B cell (primary cell): ENCODE measurements at regions of chr17 and their contacts with region 1.

Region 1: DNA sequence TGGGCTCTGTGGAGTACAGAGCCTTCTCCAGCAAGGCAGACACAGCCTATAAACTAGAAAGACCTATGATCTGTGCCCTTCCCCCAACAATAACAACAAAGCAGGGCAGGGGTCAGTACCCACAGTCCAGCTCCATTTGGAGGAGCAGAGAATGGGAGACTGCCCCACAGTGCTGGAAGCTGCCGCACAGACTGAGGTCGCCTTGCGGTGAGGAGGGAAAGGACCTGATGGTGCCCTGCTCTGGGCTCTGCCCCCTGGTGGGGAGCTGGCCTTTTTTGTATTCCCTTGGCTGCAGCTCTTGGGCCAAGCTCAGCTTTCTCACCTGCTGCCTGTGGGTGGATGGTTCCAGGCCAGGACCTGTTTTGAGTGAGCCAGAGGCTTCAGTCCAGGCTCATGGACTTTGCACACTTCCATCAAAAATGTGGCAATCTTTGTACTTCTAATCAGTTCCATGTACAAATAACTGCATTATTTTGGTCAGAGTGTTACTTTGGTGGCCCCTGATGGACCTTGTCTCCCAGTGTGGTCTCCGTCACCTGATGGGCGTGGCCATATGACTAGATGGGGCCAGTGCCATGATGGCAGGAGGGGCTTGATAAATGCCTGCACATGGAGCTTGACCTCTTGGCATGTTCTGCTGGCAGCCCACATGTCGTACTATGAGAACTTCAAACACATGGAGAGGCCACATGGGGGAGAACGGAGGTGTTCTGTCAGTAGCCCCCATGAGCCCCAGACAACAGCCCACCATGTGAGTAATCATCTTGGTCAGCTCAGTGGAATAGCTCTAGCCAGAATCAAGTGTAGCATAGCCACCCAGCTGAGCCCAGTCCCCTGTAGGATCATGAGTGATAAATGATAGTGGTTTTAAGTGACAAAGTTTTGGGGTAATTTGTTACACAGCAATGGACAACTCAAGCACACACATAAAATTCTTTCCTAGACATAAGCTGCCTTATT is 24.2 kb downstream of the B9D1 start:
- DNase-seq: peak; percentile 86
- ATAC-seq: peak; percentile 98
- H3K4me3 ChIP-seq: no peak overlapping the region
- H3K4me3 Mint-ChIP-seq: no peak overlapping the region
- H3K27ac ChIP-seq: no peak overlapping the region
- H3K27ac Mint-ChIP-seq: no peak overlapping the region
- H3K4me1 ChIP-seq: peaks cover 0 to 3% of the 10 kb centered on the region in 2 donors
- H3K4me1 Mint-ChIP-seq: no peaks in the 10 kb centered on the region
- H3K27me3 ChIP-seq: peaks cover 0 to 3% (median 0%) of the 10 kb centered on the region in 4 experiments
- H3K27me3 Mint-ChIP-seq: peaks cover 15% of the 10 kb centered on the region
- CTCF ChIP-seq: peak; percentile 88

Region 2: GRCh38 chr17:19317359-19318095 is 20.8 kb before region 1 on chr17:
- CTCF ChIA-PET with region 1: interaction called, 23 read pairs
- POLR2A ChIA-PET with region 1: no interaction called
- intact Hi-C with region 1: loop called (anchors 1 kb)
- DNase-seq: peak; percentile 54
- ATAC-seq: peak; percentile 96
- H3K4me3 ChIP-seq: no peak overlapping the region
- H3K4me3 Mint-ChIP-seq: no peak overlapping the region
- H3K27ac ChIP-seq: no peak overlapping the region
- H3K27ac Mint-ChIP-seq: no peak overlapping the region
- H3K4me1 ChIP-seq: peaks cover 0 to 4% of the 10 kb centered on the region in 2 donors
- H3K4me1 Mint-ChIP-seq: peaks cover 7% of the 10 kb centered on the region
- H3K27me3 ChIP-seq: peaks cover 0 to 20% (median 0%) of the 10 kb centered on the region in 4 experiments
- H3K27me3 Mint-ChIP-seq: peaks cover 6% of the 10 kb centered on the region
- CTCF ChIP-seq: peak; percentile 17

Region 3: DNA sequence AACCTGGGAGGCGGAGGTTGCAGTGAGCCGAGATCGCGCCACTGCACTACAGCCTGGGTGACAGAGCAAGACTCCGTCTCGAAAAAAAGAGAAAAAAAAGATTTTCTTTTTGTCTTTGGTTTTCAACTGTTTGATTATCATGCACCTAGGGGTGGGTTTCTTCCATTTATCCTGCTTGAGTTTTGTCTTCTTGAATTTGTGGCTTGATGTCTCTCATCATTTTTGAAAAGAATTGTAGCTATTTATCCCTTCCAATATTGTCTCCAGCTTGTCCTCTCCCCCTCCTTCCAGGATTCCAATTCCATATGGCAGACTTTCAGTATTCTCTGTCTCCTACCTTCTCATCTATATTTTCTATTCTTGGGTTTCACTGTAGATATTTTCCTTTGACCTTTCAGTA is 16.4 kb after region 1 on chr17:
- CTCF ChIA-PET with region 1: interaction called, 15 read pairs
- POLR2A ChIA-PET with region 1: no interaction called
- intact Hi-C with region 1: no loop called
- DNase-seq: no peak
- ATAC-seq: no peak
- H3K4me3 ChIP-seq: no peak overlapping the region
- H3K4me3 Mint-ChIP-seq: no peak overlapping the region
- H3K27ac ChIP-seq: no peak overlapping the region
- H3K27ac Mint-ChIP-seq: no peak overlapping the region
- H3K4me1 ChIP-seq: no peaks in the 10 kb centered on the region
- H3K4me1 Mint-ChIP-seq: no peaks in the 10 kb centered on the region
- H3K27me3 ChIP-seq: peaks cover 0 to 4% (median 0%) of the 10 kb centered on the region in 4 experiments
- H3K27me3 Mint-ChIP-seq: peaks cover 21% of the 10 kb centered on the region
- CTCF ChIP-seq: no peak

Region 4: DNA sequence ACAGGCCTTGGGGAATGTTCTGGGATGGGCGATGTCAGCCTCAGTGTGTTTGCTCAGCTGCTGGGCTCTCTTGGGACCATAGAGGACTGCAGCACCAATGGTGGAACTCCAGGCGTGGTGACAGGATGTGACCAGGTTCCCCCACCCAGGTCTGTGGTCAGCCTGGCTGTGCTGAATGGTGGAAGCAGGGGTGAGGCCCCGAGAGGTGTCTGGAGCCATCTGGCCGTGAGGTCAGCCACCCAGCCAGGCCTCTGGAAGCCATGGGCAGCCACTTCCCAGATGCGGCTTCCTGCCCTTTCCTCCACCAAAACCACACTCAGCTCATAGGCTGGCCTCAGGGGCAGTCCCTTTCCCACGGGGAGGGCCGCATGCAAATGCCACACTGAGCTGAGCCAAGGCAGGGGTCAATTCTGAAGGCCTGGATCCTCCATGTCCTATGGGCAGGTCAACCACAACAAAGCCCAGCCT is 32.2 kb after region 1 on chr17:
- CTCF ChIA-PET with region 1: no interaction called
- POLR2A ChIA-PET with region 1: no interaction called
- intact Hi-C with region 1: no loop called
- DNase-seq: peak; percentile 41
- ATAC-seq: peak; percentile 78
- H3K4me3 ChIP-seq: peak overlapping the region in 1 of 5 experiments; percentile 36
- H3K4me3 Mint-ChIP-seq: peak overlapping the region; percentile 87
- H3K27ac ChIP-seq: peak overlapping the region; percentile 68 to 70
- H3K27ac Mint-ChIP-seq: peak overlapping the region; percentile 94
- H3K4me1 ChIP-seq: peaks cover 37 to 53% of the 10 kb centered on the region in 2 donors
- H3K4me1 Mint-ChIP-seq: peaks cover 53% of the 10 kb centered on the region
- H3K27me3 ChIP-seq: no peaks in the 10 kb centered on the region
- H3K27me3 Mint-ChIP-seq: no peaks in the 10 kb centered on the region
- CTCF ChIP-seq: no peak

Region 5: GRCh38 chr17:19546289-19547065 is 208.2 kb after region 1 on chr17:
- CTCF ChIA-PET with region 1: no interaction called
- POLR2A ChIA-PET with region 1: no interaction called
- intact Hi-C with region 1: no loop called
- DNase-seq: peak; percentile 51
- ATAC-seq: peak; percentile 47
- H3K4me3 ChIP-seq: no peak overlapping the region
- H3K4me3 Mint-ChIP-seq: no peak overlapping the region
- H3K27ac ChIP-seq: no peak overlapping the region
- H3K27ac Mint-ChIP-seq: no peak overlapping the region
- H3K4me1 ChIP-seq: peaks cover 0 to 7% of the 10 kb centered on the region in 2 donors
- H3K4me1 Mint-ChIP-seq: peaks cover 8% of the 10 kb centered on the region
- H3K27me3 ChIP-seq: no peaks in the 10 kb centered on the region
- H3K27me3 Mint-ChIP-seq: peaks cover 3% of the 10 kb centered on the region
- CTCF ChIP-seq: no peak